Spleen (tissue), 13 donors: ENCODE measurements at regions of chr18 and their contacts with region 1.

Region 1: GRCh38 chr18:9516437-9517064 is 41.2 kb downstream of the RALBP1 start:
- DNase-seq: no peak
- H3K4me3 ChIP-seq: no peak overlapping the region
- H3K27ac ChIP-seq: no peak overlapping the region
- H3K4me1 ChIP-seq: peaks cover 0 to 39% (median 8%) of the 10 kb centered on the region in 6 donors
- H3K27me3 ChIP-seq: no peaks in the 10 kb centered on the region
- CTCF ChIP-seq: peak; percentile 56 to 88 (median 85)
- POLR2A ChIP-seq: no peak

Region 2: GRCh38 chr18:9079818-9080528 is 436.6 kb before region 1 on chr18:
- intact Hi-C with region 1: loop called (anchors 10 kb)
- DNase-seq: no peak
- H3K4me3 ChIP-seq: no peak overlapping the region
- H3K27ac ChIP-seq: peak overlapping the region in 4 of 8 donors; percentile 6 to 63 (median 44)
- H3K4me1 ChIP-seq: peaks cover 9 to 36% (median 24%) of the 10 kb centered on the region in 6 donors
- H3K27me3 ChIP-seq: no peaks in the 10 kb centered on the region
- CTCF ChIP-seq: no peak
- POLR2A ChIP-seq: no peak

Region 3: GRCh38 chr18:9297007-9297393 is 219.6 kb before region 1 on chr18:
- intact Hi-C with region 1: no loop called
- DNase-seq: no peak
- H3K4me3 ChIP-seq: no peak overlapping the region
- H3K27ac ChIP-seq: no peak overlapping the region
- H3K4me1 ChIP-seq: no peaks in the 10 kb centered on the region
- H3K27me3 ChIP-seq: no peaks in the 10 kb centered on the region
- CTCF ChIP-seq: no peak
- POLR2A ChIP-seq: no peak

Region 4: DNA sequence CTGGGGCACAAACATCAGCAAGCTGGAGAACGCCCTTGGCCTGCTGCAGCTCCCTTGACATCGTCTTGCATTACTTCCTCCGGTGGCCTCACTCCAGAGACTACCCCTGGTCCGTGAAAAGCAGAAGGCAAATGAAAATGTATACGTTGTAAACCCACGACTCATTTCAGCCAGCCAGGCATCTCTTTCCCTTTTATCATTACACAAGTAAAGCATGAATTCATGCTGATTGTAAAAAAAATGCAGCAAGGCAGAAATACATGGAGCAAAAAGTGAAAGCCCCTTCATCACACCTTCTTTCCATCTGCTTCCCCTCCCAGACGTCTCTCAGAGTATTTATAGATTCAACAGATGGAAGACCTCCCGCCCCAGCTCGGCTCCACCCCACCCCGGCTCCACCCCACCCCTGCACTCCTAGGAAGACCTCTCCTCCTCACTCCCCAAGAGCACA is 82.9 kb before region 1 on chr18:
- intact Hi-C with region 1: no loop called
- DNase-seq: no peak
- H3K4me3 ChIP-seq: peak overlapping the region in 1 of 8 donors; percentile 9
- H3K27ac ChIP-seq: peak overlapping the region in 3 of 8 donors; percentile 14 to 34 (median 33)
- H3K4me1 ChIP-seq: peaks cover 0 to 18% (median 11%) of the 10 kb centered on the region in 6 donors
- H3K27me3 ChIP-seq: no peaks in the 10 kb centered on the region
- CTCF ChIP-seq: no peak
- POLR2A ChIP-seq: no peak